SK-N-SH (cell line): ENCODE measurements at regions of chr2 and their contacts with region 1.

Region 1: GRCh38 chr2:128424406-128425171 is 105.9 kb upstream of the HS6ST1 start:
- DNase-seq: peak; percentile 84
- H3K4me3 ChIP-seq: no peak overlapping the region
- H3K27ac ChIP-seq: peak overlapping the region in 1 of 2 experiments; percentile 94; a peak in 2 of 4 replicates
- H3K4me1 ChIP-seq: peaks cover 0 to 51% of the 10 kb centered on the region in 2 experiments; a peak in 2 of 4 replicates
- H3K27me3 ChIP-seq: no peaks in the 10 kb centered on the region
- CTCF ChIP-seq: no peak
- EP300 ChIP-seq: peak in 1 of 2 experiments; percentile 95; a peak in 2 of 4 replicates
- RAD21 ChIP-seq: peak; percentile 43

Region 2: GRCh38 chr2:128413718-128414341 is 10.8 kb before region 1 on chr2:
- CTCF ChIA-PET with region 1: interaction called, 10 read pairs
- POLR2A ChIA-PET with region 1: interaction called, 6 read pairs
- DNase-seq: peak; percentile 82
- H3K4me3 ChIP-seq: no peak overlapping the region
- H3K27ac ChIP-seq: peak overlapping the region in 1 of 2 experiments; percentile 94; a peak in 2 of 4 replicates
- H3K4me1 ChIP-seq: peaks cover 0 to 43% of the 10 kb centered on the region in 2 experiments; a peak in 1 of 4 replicates
- H3K27me3 ChIP-seq: no peaks in the 10 kb centered on the region
- CTCF ChIP-seq: no peak
- EP300 ChIP-seq: peak in 1 of 2 experiments; percentile 93; a peak in 2 of 4 replicates
- RAD21 ChIP-seq: peak; percentile 3; the same call in 1 of the 2 replicates

Region 3: GRCh38 chr2:129262934-129263333 is 838.3 kb after region 1 on chr2:
- CTCF ChIA-PET with region 1: no interaction called
- POLR2A ChIA-PET with region 1: no interaction called
- DNase-seq: no peak
- H3K4me3 ChIP-seq: no peak overlapping the region
- H3K27ac ChIP-seq: no peak overlapping the region
- H3K4me1 ChIP-seq: no peaks in the 10 kb centered on the region
- H3K27me3 ChIP-seq: no peaks in the 10 kb centered on the region
- CTCF ChIP-seq: no peak
- EP300 ChIP-seq: no peak
- RAD21 ChIP-seq: no peak